Cardiac septum (tissue), 1 donor: ENCODE measurements at regions of chrX and their contacts with region 1.

Region 1: DNA sequence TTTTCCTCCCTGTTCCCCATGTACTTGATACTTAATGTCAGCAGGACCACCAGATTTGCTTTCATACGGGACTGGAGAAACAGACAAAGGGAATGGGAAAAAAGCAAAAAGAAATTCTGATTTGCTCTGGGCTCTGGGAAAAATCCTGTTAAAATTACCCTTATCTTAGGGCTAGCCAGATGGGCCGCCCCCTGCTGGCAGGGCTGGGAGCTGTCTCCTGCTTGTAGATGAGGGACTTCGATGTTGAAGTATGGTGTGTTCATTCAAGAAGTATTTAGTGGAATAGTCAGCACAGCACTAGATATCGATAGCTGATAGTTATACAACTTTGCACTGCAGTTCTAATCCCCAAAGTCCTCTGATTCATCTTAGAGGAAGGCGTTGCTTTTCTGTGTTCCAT is 45.8 kb downstream of the BCORL1 start:
- DNase-seq: no peak

Region 2: GRCh38 chrX:129925305-129926092 is 102.7 kb before region 1 on chrX:
- intact Hi-C with region 1: loop called (anchors 2 kb)
- DNase-seq: peak; percentile 84

Region 3: DNA sequence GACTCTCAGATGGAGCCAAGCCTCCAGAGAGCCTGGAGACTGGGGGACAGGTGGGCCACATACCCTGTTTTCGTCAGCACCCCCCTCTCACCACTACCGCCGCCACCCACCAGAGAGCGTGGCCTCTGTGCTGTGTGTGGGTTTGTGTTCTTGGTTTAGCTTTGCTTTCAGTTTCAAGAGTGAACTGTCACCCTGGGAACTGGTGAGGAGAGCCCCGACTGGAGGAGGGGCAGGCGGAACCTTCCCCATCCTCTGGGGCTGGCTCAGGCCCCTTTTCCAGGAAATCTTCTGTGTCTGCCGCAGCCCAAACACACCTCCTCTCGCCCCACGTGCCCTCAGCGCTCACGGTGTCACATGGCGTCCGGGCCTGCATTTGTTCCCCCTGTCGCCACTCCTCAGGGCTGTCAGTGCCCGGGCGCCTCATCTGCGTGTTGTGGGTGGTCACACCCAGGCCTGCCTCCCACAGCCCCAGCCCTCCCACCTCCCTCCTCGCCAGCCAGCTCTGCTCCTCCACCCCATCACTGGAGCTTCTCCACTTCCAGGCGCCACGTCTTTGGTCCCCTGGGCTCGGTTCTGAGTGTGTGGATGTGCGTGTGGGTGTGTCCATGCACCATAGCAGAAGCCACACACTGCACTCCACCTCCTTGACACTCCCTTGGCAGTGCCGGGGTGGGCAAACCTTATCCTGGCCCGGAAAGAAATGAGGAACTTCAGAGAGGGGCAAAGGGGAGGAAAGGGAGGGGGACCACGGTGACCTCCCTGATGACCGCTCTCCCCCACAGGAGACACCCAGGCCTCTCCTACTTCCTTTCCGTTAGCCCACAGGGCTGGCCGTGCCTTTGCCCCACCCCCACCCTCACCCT is 54.3 kb after region 1 on chrX:
- intact Hi-C with region 1: no loop called
- DNase-seq: peak; percentile 84

Region 4: GRCh38 chrX:130110379-130111219 is 82.4 kb after region 1 on chrX and contains the start of gene ELF4:
- intact Hi-C with region 1: no loop called
- DNase-seq: no peak
- total RNA-seq, gene ELF4: 3.7 TPM

Region 5: GRCh38 chrX:130413415-130413814 is 385.2 kb after region 1 on chrX:
- intact Hi-C with region 1: no loop called
- DNase-seq: no peak